ENCODE measurements at regions of chr1 and their contacts with region 1.

Region 1: DNA sequence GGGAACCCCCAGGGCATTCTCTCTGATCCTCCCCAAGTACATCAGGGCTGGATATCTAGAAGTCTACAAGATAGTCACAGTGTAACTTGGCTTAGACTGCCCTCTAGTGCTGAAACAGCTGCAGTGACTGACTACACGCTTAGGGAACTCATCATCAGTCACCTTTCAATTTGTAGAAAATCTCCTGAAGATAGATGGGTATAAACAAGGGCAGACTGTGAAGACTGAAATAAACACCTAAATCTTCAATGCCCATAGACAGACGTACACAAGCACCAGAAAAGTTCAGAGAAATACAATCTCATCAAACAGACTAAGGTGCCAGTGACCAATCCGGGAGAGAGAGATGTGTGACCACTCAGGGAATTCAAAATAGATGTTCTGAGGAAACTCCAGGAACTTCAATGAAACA is 46.6 kb downstream of the PACC1 start:
- DNase-seq: peak; percentile 64
- H3K4me3 Mint-ChIP-seq: no peak overlapping the region
- H3K27ac Mint-ChIP-seq: peak overlapping the region; percentile 56
- H3K4me1 Mint-ChIP-seq: no peaks in the 10 kb centered on the region
- H3K27me3 Mint-ChIP-seq: no peaks in the 10 kb centered on the region

Region 2: DNA sequence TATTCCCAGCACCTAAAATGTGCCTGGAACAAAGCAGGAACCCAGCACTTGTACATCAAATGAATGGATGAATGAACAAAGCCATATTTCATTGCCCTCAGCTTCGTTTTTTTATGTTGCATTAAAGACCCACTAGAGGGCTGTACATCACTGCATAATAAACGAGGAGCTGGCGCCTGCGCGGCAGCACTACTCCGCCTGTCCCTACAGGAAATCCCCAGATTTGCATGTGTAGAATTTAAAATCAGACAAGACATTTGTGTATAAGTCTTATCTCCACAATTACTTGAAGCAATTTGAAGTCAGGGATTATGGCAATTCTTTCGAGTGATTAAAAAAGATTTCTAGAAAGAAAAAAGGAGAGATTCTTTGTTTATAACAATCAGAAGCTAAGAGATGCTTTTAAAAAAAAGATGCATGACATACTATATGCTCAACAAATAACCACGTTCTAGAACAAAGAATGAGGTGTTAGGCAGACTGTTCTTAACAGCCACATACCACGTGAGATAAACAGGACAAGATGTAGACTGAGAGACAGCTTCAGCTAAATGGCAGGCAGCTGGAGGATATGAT is 687.2 kb before region 1 on chr1:
- CTCF ChIA-PET with region 1: interaction called, 4 read pairs
- POLR2A ChIA-PET with region 1: no interaction called
- intact Hi-C with region 1: loop called (anchors 10 kb)
- DNase-seq: peak; percentile 83
- H3K4me3 Mint-ChIP-seq: no peak overlapping the region
- H3K27ac Mint-ChIP-seq: peak overlapping the region; percentile 69
- H3K4me1 Mint-ChIP-seq: peaks cover 9% of the 10 kb centered on the region
- H3K27me3 Mint-ChIP-seq: no peaks in the 10 kb centered on the region

Region 3: DNA sequence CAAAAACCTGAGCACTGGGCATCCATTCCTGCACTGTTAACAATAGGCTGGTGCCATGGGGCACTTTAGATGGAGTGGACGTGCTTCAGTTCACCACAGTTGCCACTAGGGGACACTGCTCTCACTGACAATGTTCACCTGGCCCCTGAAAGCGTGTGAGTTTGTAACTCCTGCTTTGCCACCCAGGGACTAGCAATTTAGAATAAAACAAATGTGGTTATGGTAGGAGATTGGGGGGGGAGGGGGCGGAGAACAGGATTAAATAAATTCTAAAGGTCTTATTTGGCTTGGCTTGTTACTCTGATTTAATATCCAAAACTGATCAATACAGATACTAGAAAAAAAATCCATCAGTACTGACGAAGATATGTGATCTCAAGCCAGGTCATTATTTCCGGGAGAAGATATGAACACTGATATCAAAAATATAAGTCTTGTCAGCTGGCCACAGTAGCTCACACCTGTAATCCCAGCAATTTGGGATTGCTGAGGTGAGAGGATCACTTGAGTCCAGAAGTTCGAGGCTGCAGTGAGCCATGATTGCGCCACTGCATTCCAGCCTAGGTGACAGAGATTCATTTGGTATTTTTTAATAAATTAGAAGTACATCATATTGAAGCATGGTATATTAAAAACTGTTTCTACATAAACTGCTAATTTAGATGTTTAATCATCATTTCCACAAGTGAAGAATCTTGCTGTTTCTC is 355.9 kb before region 1 on chr1:
- CTCF ChIA-PET with region 1: interaction called, 18 read pairs
- POLR2A ChIA-PET with region 1: no interaction called
- intact Hi-C with region 1: loop called (anchors 1 kb)
- DNase-seq: peak; percentile 78
- H3K4me3 Mint-ChIP-seq: no peak overlapping the region
- H3K27ac Mint-ChIP-seq: no peak overlapping the region
- H3K4me1 Mint-ChIP-seq: no peaks in the 10 kb centered on the region
- H3K27me3 Mint-ChIP-seq: no peaks in the 10 kb centered on the region

Region 4: GRCh38 chr1:212070720-212071302 is 297.3 kb before region 1 on chr1:
- CTCF ChIA-PET with region 1: interaction called, 100 read pairs
- POLR2A ChIA-PET with region 1: no interaction called
- intact Hi-C with region 1: no loop called
- DNase-seq: no peak
- H3K4me3 Mint-ChIP-seq: no peak overlapping the region
- H3K27ac Mint-ChIP-seq: peak overlapping the region; percentile 32
- H3K4me1 Mint-ChIP-seq: no peaks in the 10 kb centered on the region
- H3K27me3 Mint-ChIP-seq: no peaks in the 10 kb centered on the region

Region 5: GRCh38 chr1:212229654-212230053 is 138.4 kb before region 1 on chr1:
- CTCF ChIA-PET with region 1: interaction called, 3 read pairs
- POLR2A ChIA-PET with region 1: no interaction called
- intact Hi-C with region 1: loop called (anchors 5 kb)
- DNase-seq: no peak
- H3K4me3 Mint-ChIP-seq: no peak overlapping the region
- H3K27ac Mint-ChIP-seq: no peak overlapping the region
- H3K4me1 Mint-ChIP-seq: peaks cover 30% of the 10 kb centered on the region
- H3K27me3 Mint-ChIP-seq: no peaks in the 10 kb centered on the region

Region 6: DNA sequence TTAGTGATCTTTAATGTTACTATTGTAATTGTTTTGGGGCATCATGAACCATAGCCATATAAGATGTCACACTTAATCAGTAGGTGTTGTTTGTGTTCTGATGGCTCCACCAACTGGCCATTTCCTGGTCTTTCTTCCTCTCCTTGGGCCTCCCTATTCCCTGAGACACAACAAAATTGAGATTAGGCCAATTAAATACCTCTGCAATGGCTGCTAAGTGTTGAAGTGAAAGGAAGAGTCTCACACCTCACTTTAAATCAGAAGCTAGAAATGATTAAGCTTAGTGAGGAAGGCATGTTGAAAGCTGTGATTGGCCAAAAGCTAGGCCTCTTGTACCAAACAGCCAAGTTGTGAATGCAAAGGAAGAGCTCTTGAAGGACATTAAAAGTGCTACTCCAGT is 52.2 kb before region 1 on chr1:
- CTCF ChIA-PET with region 1: interaction called, 5 read pairs
- POLR2A ChIA-PET with region 1: no interaction called
- intact Hi-C with region 1: loop called (anchors 5 kb)
- DNase-seq: peak; percentile 34
- H3K4me3 Mint-ChIP-seq: no peak overlapping the region
- H3K27ac Mint-ChIP-seq: peak overlapping the region; percentile 66
- H3K4me1 Mint-ChIP-seq: peaks cover 47% of the 10 kb centered on the region
- H3K27me3 Mint-ChIP-seq: no peaks in the 10 kb centered on the region